ENCODE measurements at regions of chr2 and their contacts with region 1.

Region 1: GRCh38 chr2:15939854-15940660 is at the start of gene MYCN:
- DNase-seq: no peak
- H3K4me3 ChIP-seq: no peak within 1 kb of the TSS
- H3K27ac ChIP-seq: no peak within 1 kb of the TSS
- H3K4me1 ChIP-seq: no peaks in the 10 kb centered on the region
- H3K27me3 ChIP-seq: peaks cover 62% of the 10 kb centered on the region
- CTCF ChIP-seq: peak; percentile 58
- total RNA-seq, gene MYCN: not detected in 2 replicates

Region 2: GRCh38 chr2:16487686-16488085 is 547.6 kb after region 1 on chr2:
- CTCF ChIA-PET with region 1: no interaction called
- POLR2A ChIA-PET with region 1: no interaction called
- intact Hi-C with region 1: loop called (anchors 10 kb)
- DNase-seq: peak in 1 of 2 experiments; percentile 43
- H3K4me3 ChIP-seq: no peak overlapping the region
- H3K27ac ChIP-seq: no peak overlapping the region
- H3K4me1 ChIP-seq: no peaks in the 10 kb centered on the region
- H3K27me3 ChIP-seq: peaks cover 18% of the 10 kb centered on the region; the same call in 1 of the 2 replicates
- CTCF ChIP-seq: peak; percentile 65